CD8-positive, alpha-beta T cell (primary cell): ENCODE measurements at regions of chr12 and their contacts with region 1.

Region 1: GRCh38 chr12:4579305-4580102 is 17.5 kb downstream of the DYRK4 start:
- DNase-seq: peak in 2 of 9 experiments; percentile 12 to 32
- ATAC-seq: no peak
- H3K4me3 ChIP-seq: no peak overlapping the region
- H3K4me3 Mint-ChIP-seq: no peak overlapping the region
- H3K27ac ChIP-seq: no peak overlapping the region
- H3K27ac Mint-ChIP-seq: no peak overlapping the region
- H3K4me1 ChIP-seq: no peaks in the 10 kb centered on the region
- H3K4me1 Mint-ChIP-seq: no peaks in the 10 kb centered on the region
- H3K27me3 ChIP-seq: no peaks in the 10 kb centered on the region
- H3K27me3 Mint-ChIP-seq: peaks cover 7% of the 10 kb centered on the region
- CTCF ChIP-seq: no peak

Region 2: GRCh38 chr12:4555804-4556203 is 23.7 kb before region 1 on chr12:
- CTCF ChIA-PET with region 1: no interaction called
- POLR2A ChIA-PET with region 1: no interaction called
- intact Hi-C with region 1: no loop called
- DNase-seq: no peak
- ATAC-seq: no peak
- H3K4me3 ChIP-seq: no peak overlapping the region
- H3K4me3 Mint-ChIP-seq: no peak overlapping the region
- H3K27ac ChIP-seq: no peak overlapping the region
- H3K27ac Mint-ChIP-seq: no peak overlapping the region
- H3K4me1 ChIP-seq: no peaks in the 10 kb centered on the region
- H3K4me1 Mint-ChIP-seq: no peaks in the 10 kb centered on the region
- H3K27me3 ChIP-seq: no peaks in the 10 kb centered on the region
- H3K27me3 Mint-ChIP-seq: no peaks in the 10 kb centered on the region
- CTCF ChIP-seq: no peak

Region 3: GRCh38 chr12:4628406-4628805 is 48.9 kb after region 1 on chr12:
- CTCF ChIA-PET with region 1: no interaction called
- POLR2A ChIA-PET with region 1: no interaction called
- intact Hi-C with region 1: no loop called
- DNase-seq: no peak
- ATAC-seq: no peak
- H3K4me3 ChIP-seq: no peak overlapping the region
- H3K4me3 Mint-ChIP-seq: no peak overlapping the region
- H3K27ac ChIP-seq: no peak overlapping the region
- H3K27ac Mint-ChIP-seq: no peak overlapping the region
- H3K4me1 ChIP-seq: no peaks in the 10 kb centered on the region
- H3K4me1 Mint-ChIP-seq: no peaks in the 10 kb centered on the region
- H3K27me3 ChIP-seq: peaks cover 0 to 2% of the 10 kb centered on the region in 2 experiments
- H3K27me3 Mint-ChIP-seq: peaks cover 3% of the 10 kb centered on the region
- CTCF ChIP-seq: no peak

Region 4: GRCh38 chr12:4743046-4743445 is 163.5 kb after region 1 on chr12:
- CTCF ChIA-PET with region 1: no interaction called
- POLR2A ChIA-PET with region 1: no interaction called
- intact Hi-C with region 1: no loop called
- DNase-seq: no peak
- ATAC-seq: no peak
- H3K4me3 ChIP-seq: no peak overlapping the region
- H3K4me3 Mint-ChIP-seq: no peak overlapping the region
- H3K27ac ChIP-seq: no peak overlapping the region
- H3K27ac Mint-ChIP-seq: no peak overlapping the region
- H3K4me1 ChIP-seq: no peaks in the 10 kb centered on the region
- H3K4me1 Mint-ChIP-seq: no peaks in the 10 kb centered on the region
- H3K27me3 ChIP-seq: no peaks in the 10 kb centered on the region
- H3K27me3 Mint-ChIP-seq: peaks cover 9% of the 10 kb centered on the region
- CTCF ChIP-seq: no peak

Region 5: DNA sequence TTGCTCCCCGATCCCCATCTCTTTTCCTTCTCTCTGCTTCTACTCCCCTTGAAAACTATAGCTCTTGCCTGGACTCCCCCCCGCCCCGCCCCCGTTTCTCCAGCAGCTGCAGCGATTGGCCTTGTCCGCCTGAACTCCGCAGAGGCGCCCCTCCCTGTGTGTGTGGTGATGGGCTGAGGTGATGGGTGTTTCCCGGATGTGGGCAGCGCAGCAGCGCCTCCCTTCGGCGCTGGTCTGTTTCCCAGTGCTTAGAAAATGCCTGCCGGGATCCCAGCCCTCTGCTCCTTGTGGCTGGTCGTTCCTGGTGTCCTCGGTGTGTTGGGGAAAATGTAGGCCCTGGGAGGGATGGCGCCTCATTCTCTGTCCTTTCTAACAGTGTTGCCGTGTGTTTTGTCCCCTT is 184.0 kb after region 1 on chr12:
- CTCF ChIA-PET with region 1: interaction called, 12 read pairs
- POLR2A ChIA-PET with region 1: no interaction called
- intact Hi-C with region 1: loop called in 1 of 2 experiments (anchors 2 kb)
- DNase-seq: peak in 3 of 9 experiments; percentile 3 to 24 (median 17)
- ATAC-seq: no peak
- H3K4me3 ChIP-seq: no peak overlapping the region
- H3K4me3 Mint-ChIP-seq: no peak overlapping the region
- H3K27ac ChIP-seq: no peak overlapping the region
- H3K27ac Mint-ChIP-seq: no peak overlapping the region
- H3K4me1 ChIP-seq: no peaks in the 10 kb centered on the region
- H3K4me1 Mint-ChIP-seq: peaks cover 3% of the 10 kb centered on the region
- H3K27me3 ChIP-seq: no peaks in the 10 kb centered on the region
- H3K27me3 Mint-ChIP-seq: peaks cover 4% of the 10 kb centered on the region
- CTCF ChIP-seq: no peak